ENCODE measurements at regions of chr10 and their contacts with region 1.

Region 1: DNA sequence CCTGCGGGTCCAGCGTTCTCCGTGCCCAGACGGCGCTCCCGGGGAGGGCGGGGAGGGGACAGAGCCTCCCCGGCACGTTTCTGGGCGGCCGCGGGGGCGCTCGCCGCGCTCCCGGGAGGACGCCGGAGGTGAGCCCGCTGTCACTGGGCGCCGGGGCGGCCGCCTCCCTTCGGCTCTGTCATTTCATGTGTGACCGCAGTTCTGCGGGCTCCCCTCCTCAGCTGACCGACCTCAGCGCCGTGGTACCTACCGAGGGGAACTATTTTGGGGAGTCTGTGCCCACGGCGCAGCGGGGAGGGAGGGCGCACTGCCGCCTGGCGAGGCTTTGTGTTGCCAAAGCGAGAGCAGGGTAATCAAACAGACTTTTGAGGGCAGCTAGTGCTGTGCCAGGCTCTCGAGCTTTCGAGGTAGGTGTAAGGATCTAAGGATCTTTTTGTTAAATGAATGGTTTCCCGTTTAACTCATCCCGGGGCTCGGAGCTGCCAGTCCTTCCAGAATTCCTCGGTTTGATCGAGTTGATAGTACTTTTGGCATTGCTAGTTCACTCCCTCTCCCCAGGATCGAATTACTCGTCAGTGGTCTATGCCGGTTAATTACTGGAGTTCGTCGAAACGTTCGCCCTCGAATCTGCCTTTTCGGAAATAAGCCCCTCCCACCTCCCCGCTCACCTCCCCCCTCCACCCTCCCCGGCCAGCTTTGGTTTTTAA is 1.9 kb downstream of the ARID5B start:
- DNase-seq: peak; percentile 18 to 80
- H3K4me3 ChIP-seq: peak overlapping the region; percentile 84 to 89
- H3K27ac ChIP-seq: peak overlapping the region; percentile 99
- H3K4me1 ChIP-seq: peaks cover 0 to 12% of the 10 kb centered on the region in 2 donors
- H3K27me3 ChIP-seq: no peaks in the 10 kb centered on the region
- CTCF ChIP-seq: peak in 2 of 3 experiments; percentile 6 to 35

Region 2: DNA sequence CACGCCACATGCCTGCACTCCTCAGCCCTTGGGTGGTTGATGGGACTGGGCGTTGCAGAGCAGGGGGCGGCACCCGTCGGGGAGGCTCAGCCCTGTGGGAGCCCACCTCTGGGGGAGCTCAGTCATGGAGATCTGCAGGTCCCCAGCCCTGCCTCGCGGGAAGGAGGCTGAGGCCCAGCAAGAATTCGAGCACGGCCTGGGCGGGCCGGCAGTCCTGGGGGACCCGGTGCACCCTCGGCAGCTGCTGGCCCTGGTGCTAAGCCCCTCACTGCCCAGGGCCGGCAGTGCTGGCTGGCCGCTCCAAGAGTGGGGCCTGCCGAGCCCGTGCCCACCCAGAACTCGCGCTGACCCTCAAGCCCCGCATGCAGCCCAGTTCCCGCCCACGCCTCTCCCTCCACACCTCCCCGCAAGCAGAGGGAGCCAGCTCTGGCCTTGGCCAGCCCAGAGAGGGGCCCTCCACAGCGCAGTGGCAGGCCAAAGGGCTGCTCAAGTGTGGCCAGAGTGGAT is 526.5 kb before region 1 on chr10:
- intact Hi-C with region 1: no loop called
- DNase-seq: no peak
- H3K4me3 ChIP-seq: no peak overlapping the region
- H3K27ac ChIP-seq: no peak overlapping the region
- H3K4me1 ChIP-seq: no peaks in the 10 kb centered on the region
- H3K27me3 ChIP-seq: no peaks in the 10 kb centered on the region
- CTCF ChIP-seq: no peak

Region 3: GRCh38 chr10:61580608-61581007 is 322.8 kb before region 1 on chr10:
- intact Hi-C with region 1: no loop called
- DNase-seq: no peak
- H3K4me3 ChIP-seq: no peak overlapping the region
- H3K27ac ChIP-seq: no peak overlapping the region
- H3K4me1 ChIP-seq: no peaks in the 10 kb centered on the region
- H3K27me3 ChIP-seq: no peaks in the 10 kb centered on the region
- CTCF ChIP-seq: no peak

Region 4: DNA sequence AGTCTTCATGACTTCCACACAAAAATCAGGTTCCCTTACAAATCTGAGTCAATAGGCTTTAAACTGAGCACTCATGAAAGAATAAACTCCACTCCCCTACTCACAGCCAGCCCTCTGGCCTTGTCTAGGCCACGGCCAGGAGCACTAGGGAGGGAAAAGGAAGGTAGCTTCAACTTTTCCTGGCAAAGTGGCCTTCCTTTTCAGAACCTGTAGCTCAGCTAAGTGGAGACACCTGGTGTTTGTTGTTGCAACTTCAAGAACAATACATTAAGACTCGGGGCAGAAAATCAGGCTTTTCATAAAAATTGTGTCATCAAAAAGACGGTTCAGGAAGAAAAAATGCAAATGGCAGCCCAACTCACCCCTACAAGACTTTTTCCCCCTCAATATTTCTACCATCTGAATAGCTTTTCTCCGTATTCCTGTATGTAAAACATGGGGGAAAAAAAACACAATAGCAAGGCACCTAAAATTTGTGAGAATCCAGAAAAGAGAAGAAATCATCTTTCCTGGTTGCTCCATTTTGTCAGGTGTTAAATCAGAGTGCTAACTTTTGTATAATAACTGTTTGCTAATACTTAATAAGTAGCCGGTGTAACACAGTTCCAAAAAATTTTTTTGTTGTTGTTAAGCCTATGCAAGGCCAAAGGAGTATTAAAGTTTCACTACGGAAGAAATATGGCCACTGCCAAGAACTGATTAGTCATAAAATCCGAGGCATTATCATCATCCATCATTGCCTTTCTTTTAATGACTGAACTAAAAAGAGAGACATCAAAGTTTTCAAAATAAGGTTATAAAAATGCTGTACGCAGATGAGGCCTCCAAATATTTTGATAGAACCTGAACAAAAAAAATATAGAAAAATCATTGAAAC is 68.1 kb before region 1 on chr10:
- intact Hi-C with region 1: loop called (anchors 5 kb)
- DNase-seq: no peak
- H3K4me3 ChIP-seq: no peak overlapping the region
- H3K27ac ChIP-seq: peak overlapping the region; percentile 45 to 71
- H3K4me1 ChIP-seq: peaks cover 3 to 19% of the 10 kb centered on the region in 2 donors
- H3K27me3 ChIP-seq: no peaks in the 10 kb centered on the region
- CTCF ChIP-seq: peak in 1 of 3 experiments; percentile 41

Region 5: DNA sequence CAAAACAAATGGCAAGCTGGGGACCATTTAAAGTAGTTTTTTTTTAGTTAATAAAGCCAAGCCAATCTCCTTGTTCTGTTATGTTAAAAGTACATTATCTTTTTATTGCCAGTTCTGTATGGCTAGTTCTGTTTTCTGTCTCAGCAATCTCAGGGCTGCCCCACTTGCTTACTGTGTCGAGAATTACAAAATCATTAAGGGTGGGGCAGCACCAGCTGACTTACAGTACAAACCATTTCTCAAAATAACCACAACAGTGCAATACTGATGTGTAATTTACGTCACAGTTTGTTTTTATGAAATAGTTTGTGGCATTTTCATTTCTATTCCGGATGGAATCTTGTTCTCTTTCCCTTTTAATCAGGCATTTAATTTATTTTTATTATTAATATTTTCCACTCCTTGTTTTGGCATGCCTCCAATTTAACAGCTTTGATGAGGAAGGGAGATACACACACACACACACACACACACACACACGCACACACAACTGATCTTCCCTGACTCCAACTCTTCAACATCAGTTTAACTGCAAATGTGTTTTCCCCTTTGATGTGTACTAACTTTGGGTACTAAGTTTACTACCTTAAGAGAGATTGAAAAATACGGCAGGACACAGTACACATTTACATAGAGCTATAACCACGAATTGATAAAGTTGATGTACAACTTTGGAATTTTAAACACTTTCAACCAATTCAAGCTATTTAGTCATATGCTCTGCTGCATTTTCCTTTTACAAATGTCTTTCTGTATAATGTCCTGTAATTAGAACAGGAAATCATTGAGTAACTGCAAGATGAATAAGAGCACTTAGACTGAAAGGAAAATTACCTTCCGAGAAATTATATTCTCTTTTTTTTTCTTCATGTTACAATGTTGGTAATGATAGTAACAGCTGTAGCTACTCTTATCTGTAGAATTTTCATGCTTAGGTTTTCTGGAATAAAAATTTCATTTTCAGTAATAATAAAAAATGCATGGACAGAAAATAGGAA is 89.6 kb after region 1 on chr10:
- intact Hi-C with region 1: loop called (anchors 2 kb)
- DNase-seq: peak; percentile 48 to 88
- H3K4me3 ChIP-seq: peak overlapping the region; percentile 34 to 40
- H3K27ac ChIP-seq: peak overlapping the region; percentile 73 to 87
- H3K4me1 ChIP-seq: peaks cover 3 to 54% of the 10 kb centered on the region in 2 donors
- H3K27me3 ChIP-seq: no peaks in the 10 kb centered on the region
- CTCF ChIP-seq: no peak

Region 6: GRCh38 chr10:62095181-62096071 is 192.1 kb after region 1 on chr10:
- intact Hi-C with region 1: loop called (anchors 5 kb)
- DNase-seq: no peak
- H3K4me3 ChIP-seq: no peak overlapping the region
- H3K27ac ChIP-seq: peak overlapping the region in 1 of 2 donors; percentile 27
- H3K4me1 ChIP-seq: peaks cover 4 to 19% of the 10 kb centered on the region in 2 donors
- H3K27me3 ChIP-seq: no peaks in the 10 kb centered on the region
- CTCF ChIP-seq: no peak

Region 7: GRCh38 chr10:62373995-62374861 is 470.9 kb after region 1 on chr10 and contains the start of gene ZNF365:
- intact Hi-C with region 1: loop called (anchors 5 kb)
- DNase-seq: peak in 1 of 2 donors; percentile 77
- H3K4me3 ChIP-seq: peak within 1 kb of the TSS; percentile 55 to 93
- H3K27ac ChIP-seq: peak within 1 kb of the TSS; percentile 70 to 82
- H3K4me1 ChIP-seq: peaks cover 4% of the 10 kb centered on the region in 2 donors
- H3K27me3 ChIP-seq: no peaks in the 10 kb centered on the region
- CTCF ChIP-seq: peak in 1 of 3 experiments; percentile 8
- total RNA-seq, gene ZNF365: not detected

Measured in ascending aorta (tissue), 2 donors.